Activated naive CD4-positive, alpha-beta T cell treated with anti-CD3 and anti-CD28 coated beads for 36 hours (primary cell): ENCODE measurements at regions of chr16 and their contacts with region 1.

Region 1: GRCh38 chr16:77190478-77191258 is at the start of gene MON1B:
- DNase-seq: peak; percentile 96
- H3K4me3 Mint-ChIP-seq: peak within 1 kb of the TSS; percentile 82
- H3K27ac Mint-ChIP-seq: peak within 1 kb of the TSS; percentile 99
- H3K4me1 Mint-ChIP-seq: peaks cover 29% of the 10 kb centered on the region
- H3K27me3 Mint-ChIP-seq: no peaks in the 10 kb centered on the region
- total RNA-seq, gene MON1B: 69.6 to 71.0 TPM

Region 2: GRCh38 chr16:75555707-75556430 is 1634.8 kb before region 1 on chr16 and contains the start of gene TMEM231:
- CTCF ChIA-PET with region 1: no interaction called
- intact Hi-C with region 1: loop called (anchors 1 kb)
- DNase-seq: peak; percentile 98
- H3K4me3 Mint-ChIP-seq: peak within 1 kb of the TSS; percentile 87
- H3K27ac Mint-ChIP-seq: peak within 1 kb of the TSS; percentile 77
- H3K4me1 Mint-ChIP-seq: peaks cover 5% of the 10 kb centered on the region
- H3K27me3 Mint-ChIP-seq: peaks cover 8% of the 10 kb centered on the region
- total RNA-seq, gene TMEM231: 4.5 to 5.4 TPM

Region 3: DNA sequence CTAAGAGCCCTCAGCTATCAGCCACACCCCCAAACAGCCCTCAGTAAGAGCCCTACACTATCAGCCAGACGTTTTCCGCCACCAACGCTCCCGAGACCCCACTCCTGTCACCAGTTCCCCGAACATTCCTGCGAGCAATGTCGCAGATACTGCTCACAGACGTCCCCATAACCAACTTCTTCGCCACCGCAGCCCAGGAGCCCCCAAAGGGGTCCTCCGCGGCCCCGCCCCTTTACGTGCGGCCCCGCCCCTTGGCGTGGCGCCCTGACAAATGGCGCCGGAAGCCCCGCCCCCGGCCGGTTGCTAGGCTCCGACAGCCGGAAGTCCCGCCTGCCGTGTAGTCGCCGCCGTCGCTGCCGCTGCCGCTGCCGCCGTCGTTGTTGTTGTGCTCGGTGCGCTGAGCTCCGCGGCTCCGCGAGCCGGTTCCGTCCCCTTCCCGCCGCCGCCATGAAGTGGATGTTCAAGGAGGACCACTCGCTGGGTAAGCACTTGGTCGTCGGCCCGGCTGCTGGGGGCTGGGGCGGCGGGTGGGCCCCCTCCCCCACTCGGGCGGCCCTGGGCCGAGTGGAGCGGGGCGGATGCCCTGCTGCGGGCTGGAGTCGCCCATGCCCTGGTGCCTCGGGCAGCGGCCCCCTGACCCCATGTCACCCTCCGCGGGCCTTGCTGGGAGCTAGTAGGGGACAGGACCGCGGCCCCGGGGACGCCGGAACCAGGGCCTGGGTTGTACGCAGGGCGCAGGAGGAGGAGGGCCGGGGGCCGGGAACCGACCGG is 1624.4 kb before region 1 on chr16 and contains the start of gene GABARAPL2:
- CTCF ChIA-PET with region 1: no interaction called
- intact Hi-C with region 1: loop called (anchors 1 kb)
- DNase-seq: peak; percentile 89
- H3K4me3 Mint-ChIP-seq: peak within 1 kb of the TSS; percentile 98
- H3K27ac Mint-ChIP-seq: peak within 1 kb of the TSS; percentile 94
- H3K4me1 Mint-ChIP-seq: peaks cover 38% of the 10 kb centered on the region
- H3K27me3 Mint-ChIP-seq: peaks cover 3% of the 10 kb centered on the region
- total RNA-seq, gene GABARAPL2: 63.3 to 66.8 TPM

Region 4: DNA sequence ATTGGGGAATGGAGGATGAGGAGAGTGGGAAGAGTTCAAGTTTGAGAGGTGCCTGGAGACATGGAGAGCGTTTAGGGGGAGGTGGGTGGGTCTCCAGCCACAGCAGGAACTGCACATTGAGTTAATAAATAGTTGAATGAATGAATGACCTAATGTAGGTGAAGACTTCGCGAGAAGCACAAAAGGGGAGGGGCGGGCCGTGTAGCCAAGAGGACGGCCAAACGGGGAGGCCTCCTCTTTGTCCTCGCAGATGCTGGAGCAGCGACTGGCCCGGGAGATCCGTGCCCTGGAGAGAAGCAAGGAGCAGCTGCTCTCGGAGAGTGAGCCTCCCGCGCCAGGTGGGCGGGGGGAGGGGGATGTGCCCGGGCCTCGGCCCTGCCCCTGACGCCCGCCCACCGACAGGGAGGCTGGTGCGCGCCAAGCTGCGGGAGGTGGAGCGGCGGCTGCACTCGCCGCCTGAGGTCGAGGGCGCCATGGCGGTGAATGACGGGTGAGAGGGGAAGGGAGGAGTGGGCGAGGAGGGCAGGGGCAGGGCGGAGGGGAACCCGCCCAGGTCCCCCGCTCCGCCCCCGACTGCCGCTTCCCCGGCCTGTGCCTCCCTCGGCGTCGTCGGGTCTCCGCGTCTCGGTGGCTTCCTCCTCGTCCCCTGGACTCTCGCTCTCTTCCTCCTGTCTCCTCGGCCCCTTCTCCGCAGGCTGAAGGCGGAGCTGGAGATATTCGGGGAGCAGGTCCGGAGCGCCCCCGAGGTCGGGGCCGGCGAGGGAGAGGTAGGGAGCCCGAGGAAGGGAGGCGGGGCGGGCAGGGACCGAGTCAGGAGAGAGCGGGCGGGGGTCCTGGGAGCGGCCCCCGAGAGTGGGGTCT is 21.4 kb after region 1 on chr16:
- CTCF ChIA-PET with region 1: no interaction called
- intact Hi-C with region 1: loop called (anchors 1 kb)
- DNase-seq: peak; percentile 81
- H3K4me3 Mint-ChIP-seq: peak overlapping the region; percentile 77
- H3K27ac Mint-ChIP-seq: no peak overlapping the region
- H3K4me1 Mint-ChIP-seq: peaks cover 8% of the 10 kb centered on the region
- H3K27me3 Mint-ChIP-seq: no peaks in the 10 kb centered on the region

Region 5: DNA sequence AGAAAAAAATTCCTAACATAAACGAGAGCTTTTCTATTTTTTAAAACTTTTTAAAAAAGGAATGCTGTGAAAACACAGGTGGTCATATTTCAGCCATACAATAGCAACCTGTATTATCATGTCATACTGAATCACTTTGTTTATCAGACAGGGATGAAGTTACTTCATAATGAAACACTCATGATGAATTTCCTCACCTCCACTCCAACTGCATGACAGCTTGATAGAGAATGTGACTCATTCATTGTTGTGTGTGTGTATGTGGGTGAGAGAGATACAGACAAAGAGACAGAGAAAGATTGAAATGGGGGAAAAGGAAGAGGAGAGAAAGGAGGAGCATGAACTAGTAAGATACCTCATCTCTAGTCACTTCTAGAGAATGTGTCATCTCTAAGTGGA is 117.5 kb after region 1 on chr16:
- CTCF ChIA-PET with region 1: no interaction called
- intact Hi-C with region 1: loop called (anchors 1 kb)
- DNase-seq: peak; percentile 10
- H3K4me3 Mint-ChIP-seq: no peak overlapping the region
- H3K27ac Mint-ChIP-seq: peak overlapping the region; percentile 83
- H3K4me1 Mint-ChIP-seq: peaks cover 19% of the 10 kb centered on the region
- H3K27me3 Mint-ChIP-seq: peaks cover 20% of the 10 kb centered on the region

Region 6: GRCh38 chr16:77376358-77376757 is 185.7 kb after region 1 on chr16:
- CTCF ChIA-PET with region 1: no interaction called
- intact Hi-C with region 1: no loop called
- DNase-seq: peak; percentile 7
- H3K4me3 Mint-ChIP-seq: no peak overlapping the region
- H3K27ac Mint-ChIP-seq: no peak overlapping the region
- H3K4me1 Mint-ChIP-seq: no peaks in the 10 kb centered on the region
- H3K27me3 Mint-ChIP-seq: peaks cover 4% of the 10 kb centered on the region

Region 7: GRCh38 chr16:78099372-78100161 is 908.9 kb after region 1 on chr16 and contains the start of gene WWOX:
- CTCF ChIA-PET with region 1: no interaction called
- intact Hi-C with region 1: loop called (anchors 1 kb)
- DNase-seq: peak; percentile 95
- H3K4me3 Mint-ChIP-seq: peak within 1 kb of the TSS; percentile 84
- H3K27ac Mint-ChIP-seq: peak within 1 kb of the TSS; percentile 88
- H3K4me1 Mint-ChIP-seq: peaks cover 24% of the 10 kb centered on the region
- H3K27me3 Mint-ChIP-seq: peaks cover 3% of the 10 kb centered on the region
- total RNA-seq, gene WWOX: 20.2 to 21.4 TPM